ENCODE measurements at regions of chr17 and their contacts with region 1.

Region 1: DNA sequence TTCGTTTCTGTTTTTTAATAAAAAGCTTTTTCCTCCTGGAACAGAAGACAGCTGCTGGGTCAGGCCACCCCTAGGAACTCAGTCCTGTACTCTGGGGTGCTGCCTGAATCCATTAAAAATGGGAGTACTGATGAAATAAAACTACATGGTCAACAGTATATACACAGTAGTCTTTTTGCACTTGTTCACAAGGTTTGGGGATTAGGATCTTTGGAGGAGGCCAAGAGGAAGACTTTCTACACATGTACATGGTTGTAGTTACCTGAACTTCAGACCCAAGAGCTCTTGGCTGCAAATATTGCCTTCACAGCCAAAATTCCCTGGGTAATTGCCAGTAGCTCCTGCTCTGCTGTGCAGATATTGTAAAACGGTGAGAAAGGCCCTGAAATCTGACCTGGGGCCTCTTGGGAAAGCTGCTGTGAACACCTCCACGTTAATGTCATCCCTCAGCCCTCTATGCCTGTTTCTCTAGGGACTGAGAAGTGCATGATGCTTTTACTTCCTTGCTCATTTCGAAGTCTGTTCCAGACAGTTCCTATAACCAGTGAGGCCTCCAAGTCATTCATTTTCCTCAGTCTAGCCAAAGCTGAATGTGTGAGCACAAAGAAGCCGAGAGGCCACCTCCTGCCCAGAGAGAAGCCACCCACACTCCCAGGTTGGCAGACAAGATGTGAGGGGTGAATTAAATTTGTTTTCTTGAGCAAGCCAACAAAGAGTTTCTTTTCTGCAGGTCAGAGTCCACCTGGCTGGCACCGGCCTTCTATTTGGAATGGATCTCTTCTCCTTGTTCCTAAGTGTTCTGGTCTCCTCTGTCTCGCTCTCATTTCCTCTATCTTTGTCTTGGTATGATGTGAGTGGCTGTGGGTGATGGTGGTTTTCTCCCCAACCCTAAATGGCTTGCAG is 15.9 kb downstream of the ANKRD40 start:
- DNase-seq: no peak
- H3K27ac ChIP-seq: peak overlapping the region; percentile 61
- CTCF ChIP-seq: no peak

Region 2: GRCh38 chr17:50588391-50589049 is 103.3 kb before region 1 on chr17:
- CTCF ChIA-PET with region 1: no interaction called
- POLR2A ChIA-PET with region 1: no interaction called
- DNase-seq: no peak
- H3K27ac ChIP-seq: peak overlapping the region; percentile 10; the same call in 1 of the 2 replicates
- CTCF ChIP-seq: no peak

Region 3: DNA sequence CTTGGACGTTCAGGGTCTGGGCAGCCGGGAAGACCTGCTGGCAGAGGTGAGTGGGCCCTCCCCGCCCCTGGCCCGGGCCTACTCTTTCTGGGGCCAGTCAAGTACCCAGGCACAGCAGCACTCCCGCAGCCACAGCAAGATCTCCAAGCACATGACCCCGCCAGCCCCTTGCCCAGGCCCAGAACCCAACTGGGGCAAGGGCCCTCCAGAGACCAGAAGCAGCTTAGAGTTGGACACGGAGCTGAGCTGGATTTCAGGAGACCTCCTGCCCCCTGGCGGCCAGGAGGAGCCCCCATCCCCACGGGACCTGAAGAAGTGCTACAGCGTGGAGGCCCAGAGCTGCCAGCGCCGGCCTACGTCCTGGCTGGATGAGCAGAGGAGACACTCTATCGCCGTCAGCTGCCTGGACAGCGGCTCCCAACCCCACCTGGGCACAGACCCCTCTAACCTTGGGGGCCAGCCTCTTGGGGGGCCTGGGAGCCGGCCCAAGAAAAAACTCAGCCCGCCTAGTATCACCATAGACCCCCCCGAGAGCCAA is 65.7 kb before region 1 on chr17:
- CTCF ChIA-PET with region 1: interaction called, 21 read pairs
- POLR2A ChIA-PET with region 1: no interaction called
- DNase-seq: peak; percentile 60
- H3K27ac ChIP-seq: no peak overlapping the region
- CTCF ChIP-seq: peak; percentile 69

Measured in RWPE1 (cell line).